ENCODE measurements at regions of chr11 and their contacts with region 1.

Region 1: DNA sequence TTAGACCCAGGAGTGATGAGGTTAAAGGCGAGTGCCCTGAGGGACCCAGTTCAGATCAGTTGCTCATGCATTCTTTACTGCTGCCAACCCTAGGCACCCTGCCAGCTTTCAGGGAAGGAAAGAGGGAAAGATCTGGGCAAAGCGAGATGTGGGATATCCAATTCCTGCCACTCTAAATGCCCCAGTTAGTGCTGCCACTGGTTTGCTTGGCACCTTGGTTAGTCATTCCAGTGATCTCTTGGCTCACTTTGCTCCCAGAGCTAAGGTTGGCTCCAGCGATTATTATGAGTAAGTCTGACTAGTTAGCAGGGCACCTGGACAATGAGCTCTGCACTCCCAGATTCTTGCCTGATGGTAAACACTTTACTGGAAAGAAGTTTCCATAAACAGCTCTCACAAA is 85.0 kb downstream of the INSC start:
- DNase-seq: peak; percentile 81
- H3K4me3 ChIP-seq: no peak overlapping the region
- H3K27ac ChIP-seq: no peak overlapping the region
- H3K4me1 ChIP-seq: peaks cover 37% of the 10 kb centered on the region
- H3K27me3 ChIP-seq: no peaks in the 10 kb centered on the region

Region 2: DNA sequence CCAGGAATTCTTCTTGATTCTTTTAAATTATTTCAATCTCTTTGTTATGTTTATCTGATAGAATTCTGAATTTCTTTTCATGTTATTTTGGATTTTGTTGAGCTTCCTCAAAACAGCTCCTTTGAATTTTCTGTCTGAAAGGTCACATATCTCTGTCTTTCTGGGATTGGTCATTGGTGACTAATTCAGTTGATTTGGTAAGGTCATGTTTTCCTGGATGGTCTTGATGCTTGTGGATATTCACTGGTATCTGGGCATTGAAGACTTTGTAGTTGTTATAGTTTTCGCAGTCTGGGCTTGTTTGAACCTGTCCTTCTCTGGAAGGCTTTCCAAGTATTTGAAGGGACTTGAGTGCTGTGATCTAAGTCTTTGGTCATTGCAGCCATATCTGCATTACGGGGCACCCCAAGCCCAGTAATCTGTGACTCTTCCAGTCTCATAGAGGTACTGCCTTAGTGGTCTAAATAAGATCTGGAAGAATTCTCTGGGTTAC is 103.9 kb before region 1 on chr11:
- in situ Hi-C with region 1: loop called (anchors 5 kb)
- DNase-seq: peak; percentile 36
- H3K4me3 ChIP-seq: no peak overlapping the region
- H3K27ac ChIP-seq: no peak overlapping the region
- H3K4me1 ChIP-seq: peaks cover 7% of the 10 kb centered on the region; the same call in 1 of the 2 replicates
- H3K27me3 ChIP-seq: no peaks in the 10 kb centered on the region